Heart right ventricle (tissue), 16 donors: ENCODE measurements at regions of chr1 and their contacts with region 1.

Region 1: DNA sequence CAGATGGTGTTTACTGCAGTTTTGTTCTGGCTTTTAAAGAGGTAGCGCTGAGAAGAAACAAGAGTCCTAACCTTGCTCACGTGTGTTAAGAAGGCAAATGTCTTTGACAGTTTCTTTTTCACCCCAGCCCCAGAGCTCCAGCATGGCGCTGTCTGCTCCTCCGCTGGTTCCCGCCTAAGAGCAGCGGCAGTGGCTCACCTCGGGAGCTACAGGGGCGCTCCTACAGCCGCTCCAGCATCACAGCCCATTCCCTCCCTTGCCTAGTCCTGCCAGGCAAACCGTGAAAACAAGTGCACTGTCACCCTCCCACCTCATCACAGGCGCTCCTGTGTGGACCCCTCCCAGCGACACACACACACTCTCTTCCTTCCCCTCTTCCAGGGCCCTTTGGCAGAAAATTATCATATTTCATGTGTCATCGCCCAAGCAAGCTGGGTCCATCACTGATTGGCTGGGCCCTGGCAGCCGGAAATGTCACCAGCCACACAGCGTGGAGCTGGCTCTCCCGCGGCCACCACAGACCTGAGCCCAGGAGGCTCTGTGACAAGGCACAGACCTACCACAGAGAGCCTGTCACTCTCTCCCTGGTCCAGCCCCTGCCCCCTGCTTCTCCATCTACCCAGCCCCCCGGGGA is 1.2 kb upstream of the HIVEP3 start:
- DNase-seq: peak; percentile 19 to 60
- ATAC-seq: peak; percentile 74 to 88 (median 77)
- H3K4me3 ChIP-seq: peak overlapping the region in 8 of 10 donors; percentile 5 to 66 (median 30)
- H3K27ac ChIP-seq: peak overlapping the region in 4 of 10 donors; percentile 21 to 66 (median 28)
- H3K4me1 ChIP-seq: peaks cover 8 to 57% (median 34%) of the 10 kb centered on the region in 9 donors
- H3K27me3 ChIP-seq: peaks cover 0 to 38% (median 0%) of the 10 kb centered on the region in 7 donors
- CTCF ChIP-seq: no peak

Region 2: DNA sequence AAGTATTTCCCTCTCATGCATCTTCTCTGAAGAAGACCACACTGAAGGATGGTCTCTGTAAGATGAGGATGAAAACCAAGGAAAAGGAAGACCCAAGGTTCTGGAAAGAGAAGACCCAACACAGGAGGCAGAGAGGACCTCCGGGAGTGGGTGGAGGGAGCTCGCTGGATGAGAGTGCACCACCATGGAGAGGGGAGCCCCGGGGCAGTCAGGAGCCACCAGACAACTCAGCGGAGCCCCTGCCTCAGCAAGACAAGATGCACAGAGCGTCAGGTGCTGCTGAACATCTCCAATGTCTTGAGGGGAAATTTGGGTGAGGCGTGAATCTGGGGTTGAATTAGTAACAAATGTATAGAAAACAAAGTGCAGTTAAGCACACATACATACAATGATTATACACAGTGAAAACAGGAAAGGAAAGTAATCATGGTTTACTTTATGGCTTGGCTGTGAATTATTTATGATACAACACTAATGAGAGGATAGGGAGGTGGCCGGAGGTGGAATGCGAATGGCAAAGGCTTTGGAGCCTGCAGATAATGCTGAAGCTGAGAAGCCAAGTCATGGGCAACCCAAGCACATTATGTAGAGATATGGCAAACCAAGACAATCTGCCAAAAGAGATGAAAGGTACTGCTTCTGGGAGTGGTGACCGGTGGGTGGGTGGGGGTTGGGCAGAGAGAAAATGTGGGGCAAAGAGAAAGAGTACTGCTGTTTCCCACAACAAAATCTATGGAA is 355.0 kb before region 1 on chr1:
- intact Hi-C with region 1: loop called in 1 of 10 experiments (anchors 5 kb)
- DNase-seq: no peak
- ATAC-seq: no peak
- H3K4me3 ChIP-seq: no peak overlapping the region
- H3K27ac ChIP-seq: no peak overlapping the region
- H3K4me1 ChIP-seq: no peaks in the 10 kb centered on the region
- H3K27me3 ChIP-seq: no peaks in the 10 kb centered on the region
- CTCF ChIP-seq: no peak

Region 3: GRCh38 chr1:41802532-41803501 is 117.1 kb before region 1 on chr1:
- intact Hi-C with region 1: loop called in 1 of 10 experiments (anchors 10 kb)
- DNase-seq: peak; percentile 53 to 73
- ATAC-seq: peak; percentile 54 to 80 (median 58)
- H3K4me3 ChIP-seq: no peak overlapping the region
- H3K27ac ChIP-seq: peak overlapping the region in 3 of 10 donors; percentile 34 to 82 (median 56)
- H3K4me1 ChIP-seq: peaks cover 3 to 64% (median 11%) of the 10 kb centered on the region in 9 donors
- H3K27me3 ChIP-seq: no peaks in the 10 kb centered on the region
- CTCF ChIP-seq: no peak

Region 4: DNA sequence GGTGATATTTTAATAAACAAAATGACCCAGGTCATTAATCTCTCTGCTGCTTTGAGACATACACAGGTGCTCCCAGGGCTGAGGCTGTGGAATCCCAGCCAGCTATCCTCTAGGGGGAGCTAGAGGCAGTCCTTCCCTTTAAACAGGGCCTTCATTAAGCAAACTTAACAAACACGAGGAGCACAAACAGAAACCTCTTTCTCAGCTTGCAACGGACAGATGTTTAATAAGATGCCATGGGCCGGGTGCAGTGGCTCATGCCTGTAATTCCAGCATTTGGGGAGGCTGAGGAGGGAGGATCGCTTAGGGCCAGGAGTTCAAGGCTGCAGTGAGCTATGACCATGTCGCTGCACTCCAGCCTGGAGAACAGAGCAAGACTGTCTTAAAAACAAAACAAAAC is 107.8 kb before region 1 on chr1:
- intact Hi-C with region 1: loop called in 2 of 10 experiments (anchors 5 to 10 kb)
- DNase-seq: peak in 1 of 2 donors; percentile 44
- ATAC-seq: peak in 2 of 8 donors; percentile 5 to 25
- H3K4me3 ChIP-seq: peak overlapping the region in 1 of 10 donors; percentile 1
- H3K27ac ChIP-seq: peak overlapping the region in 8 of 10 donors; percentile 28 to 86 (median 70)
- H3K4me1 ChIP-seq: peaks cover 0 to 54% (median 36%) of the 10 kb centered on the region in 9 donors
- H3K27me3 ChIP-seq: no peaks in the 10 kb centered on the region
- CTCF ChIP-seq: peak; percentile 30 to 75 (median 65)

Region 5: DNA sequence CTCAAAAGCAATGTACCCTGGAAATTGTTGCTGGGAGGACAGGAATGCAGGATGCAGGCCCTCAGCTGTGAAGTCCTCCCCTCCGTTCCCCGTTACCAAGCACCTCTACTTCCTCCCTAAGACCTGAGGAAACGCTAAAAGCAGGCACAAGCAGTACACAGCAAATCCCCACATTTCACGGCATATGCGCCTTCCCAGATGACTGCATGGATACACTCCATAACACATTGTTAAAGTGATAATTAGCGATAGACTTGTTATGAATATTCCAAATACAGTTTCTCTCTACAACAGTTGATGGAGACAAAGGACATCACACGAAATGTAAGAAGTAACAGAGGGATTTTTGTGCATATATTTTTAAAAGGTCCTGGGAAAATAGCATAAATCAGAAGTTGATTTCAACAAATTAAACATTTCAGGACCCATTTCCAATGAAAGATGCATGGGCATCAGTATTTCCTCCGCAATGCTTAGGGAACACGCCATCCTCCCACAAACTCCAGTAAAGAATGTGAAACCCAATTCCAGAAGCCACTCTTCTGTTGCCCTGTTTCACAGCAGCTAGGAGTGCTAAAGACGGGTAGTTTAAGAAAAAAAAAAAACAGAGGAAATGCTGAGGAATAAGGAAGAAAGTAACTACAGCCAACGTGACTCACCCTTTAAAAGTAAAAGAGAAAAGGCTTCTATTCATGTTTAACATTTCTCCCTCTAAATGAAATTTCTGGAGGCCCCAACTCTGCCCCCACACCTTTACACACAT is 76.7 kb before region 1 on chr1:
- intact Hi-C with region 1: loop called in 1 of 10 experiments (anchors 5 kb)
- DNase-seq: no peak
- ATAC-seq: peak in 1 of 8 donors; percentile 46
- H3K4me3 ChIP-seq: no peak overlapping the region
- H3K27ac ChIP-seq: peak overlapping the region in 1 of 10 donors; percentile 19
- H3K4me1 ChIP-seq: peaks cover 4 to 54% (median 27%) of the 10 kb centered on the region in 9 donors
- H3K27me3 ChIP-seq: no peaks in the 10 kb centered on the region
- CTCF ChIP-seq: no peak

Region 6: GRCh38 chr1:42035830-42036604 is 116.1 kb after region 1 on chr1:
- intact Hi-C with region 1: loop called in 3 of 10 experiments (anchors 5 kb)
- DNase-seq: peak; percentile 96 to 98
- ATAC-seq: peak; percentile 97 to 99 (median 98)
- H3K4me3 ChIP-seq: peak overlapping the region in 9 of 10 donors; percentile 81 to 99 (median 95)
- H3K27ac ChIP-seq: peak overlapping the region; percentile 29 to 91 (median 81)
- H3K4me1 ChIP-seq: peaks cover 0 to 18% (median 12%) of the 10 kb centered on the region in 9 donors
- H3K27me3 ChIP-seq: no peaks in the 10 kb centered on the region
- CTCF ChIP-seq: no peak